ENCODE measurements at regions of chr19 and their contacts with region 1.

Region 1: DNA sequence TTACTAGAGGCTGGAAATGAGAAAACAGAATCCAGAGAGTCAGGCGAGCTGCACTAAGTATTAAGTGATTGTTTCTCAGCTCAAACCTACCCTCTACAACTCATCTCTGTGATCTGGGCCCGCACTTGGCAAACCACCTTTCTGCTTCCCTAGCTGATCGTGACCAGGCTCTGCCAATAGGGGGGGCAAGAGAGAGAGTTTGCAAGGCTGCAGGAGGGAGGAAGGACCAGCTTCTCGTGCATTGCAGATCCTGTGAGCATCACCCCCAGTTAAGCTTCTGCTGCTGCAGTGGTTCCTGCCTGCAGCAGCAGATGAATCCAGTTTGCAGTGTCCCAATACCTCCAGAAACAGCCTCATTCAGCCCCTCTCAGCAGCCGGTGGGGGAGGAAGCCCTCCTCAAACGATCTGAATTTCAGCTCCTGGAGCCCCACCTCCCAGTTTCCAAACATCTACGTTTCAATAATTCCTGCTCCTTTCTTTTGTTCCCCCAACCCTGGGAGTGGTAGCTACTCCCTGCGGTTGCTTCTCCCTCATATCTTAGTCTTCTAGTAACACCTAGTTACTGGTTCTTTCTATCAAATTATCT is 20.0 kb downstream of the XRCC1 start:
- DNase-seq: peak; percentile 78 to 87
- ATAC-seq: peak; percentile 87 to 94
- H3K4me3 ChIP-seq: no peak overlapping the region
- H3K27ac ChIP-seq: no peak overlapping the region
- H3K4me1 ChIP-seq: no peaks in the 10 kb centered on the region
- CTCF ChIP-seq: peak; percentile 81
- EP300 ChIP-seq: no peak
- POLR2A ChIP-seq: no peak
- RAD21 ChIP-seq: peak; percentile 55 to 77

Region 2: GRCh38 chr19:43498233-43498842 is 56.9 kb before region 1 on chr19:
- CTCF ChIA-PET with region 1: no interaction called
- POLR2A ChIA-PET with region 1: no interaction called
- DNase-seq: no peak
- ATAC-seq: no peak
- H3K4me3 ChIP-seq: no peak overlapping the region
- H3K27ac ChIP-seq: no peak overlapping the region
- H3K4me1 ChIP-seq: peaks cover 4% of the 10 kb centered on the region; the same call in 1 of the 3 replicates
- CTCF ChIP-seq: no peak
- EP300 ChIP-seq: no peak
- POLR2A ChIP-seq: no peak
- RAD21 ChIP-seq: no peak

Region 3: GRCh38 chr19:43526884-43527859 is 28.1 kb before region 1 on chr19 and contains the start of gene ETHE1:
- CTCF ChIA-PET with region 1: interaction called, 167 read pairs
- POLR2A ChIA-PET with region 1: interaction called, 4 read pairs
- DNase-seq: peak; percentile 62 to 89
- ATAC-seq: peak; percentile 80 to 89
- H3K4me3 ChIP-seq: peak within 1 kb of the TSS; percentile 90
- H3K27ac ChIP-seq: peak within 1 kb of the TSS; percentile 79 to 90
- H3K4me1 ChIP-seq: peaks cover 35% of the 10 kb centered on the region
- CTCF ChIP-seq: no peak
- EP300 ChIP-seq: no peak
- POLR2A ChIP-seq: peak; percentile 96
- RAD21 ChIP-seq: no peak
- polyA plus RNA-seq, gene ETHE1: 58.9 and 75.6 TPM in 2 replicates

Region 4: DNA sequence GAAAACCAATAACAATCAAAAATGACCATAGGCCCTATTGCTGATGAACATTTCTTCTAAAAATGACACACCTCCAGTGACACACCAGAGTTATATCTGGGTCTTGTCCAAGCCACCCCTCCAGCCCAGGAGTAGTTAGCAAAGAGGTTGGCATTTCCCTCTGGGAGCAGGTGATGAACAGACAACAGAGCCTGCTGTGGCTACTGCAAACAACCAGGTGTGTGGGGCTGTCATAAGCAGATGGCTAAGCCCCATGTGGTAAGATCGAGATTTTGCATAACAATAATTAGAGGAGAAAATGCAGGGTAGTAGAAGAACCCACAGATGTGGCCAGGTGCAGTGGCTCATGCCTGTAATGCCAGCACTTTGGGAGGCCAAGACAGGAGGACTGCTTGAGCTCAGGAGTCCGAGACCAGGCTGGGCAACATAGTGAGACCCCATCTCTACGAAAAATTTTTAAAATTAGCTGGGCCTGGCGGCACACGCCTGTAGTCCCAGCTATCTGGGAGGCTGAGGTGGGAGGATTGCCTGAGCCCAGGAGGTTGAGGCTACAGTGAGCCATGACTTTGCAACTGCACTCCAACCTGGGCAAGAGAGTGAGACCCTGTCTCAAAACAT is 15.0 kb after region 1 on chr19:
- CTCF ChIA-PET with region 1: interaction called, 69 read pairs
- POLR2A ChIA-PET with region 1: no interaction called
- DNase-seq: no peak
- ATAC-seq: no peak
- H3K4me3 ChIP-seq: no peak overlapping the region
- H3K27ac ChIP-seq: no peak overlapping the region
- H3K4me1 ChIP-seq: peaks cover 5% of the 10 kb centered on the region; the same call in 1 of the 3 replicates
- CTCF ChIP-seq: no peak
- EP300 ChIP-seq: no peak
- POLR2A ChIP-seq: no peak
- RAD21 ChIP-seq: no peak

Region 5: GRCh38 chr19:43595999-43596841 is 40.9 kb after region 1 on chr19 and contains the starts of genes IRGQ and ZNF576:
- CTCF ChIA-PET with region 1: interaction called, 44 read pairs
- POLR2A ChIA-PET with region 1: no interaction called
- DNase-seq: peak; percentile 99 to 100
- ATAC-seq: peak; percentile 88 to 89
- H3K4me3 ChIP-seq: peak within 1 kb of the TSS; percentile 66
- H3K27ac ChIP-seq: peak within 1 kb of the TSS; percentile 86 to 88
- H3K4me1 ChIP-seq: peaks cover 19% of the 10 kb centered on the region
- CTCF ChIP-seq: no peak
- EP300 ChIP-seq: no peak
- POLR2A ChIP-seq: peak; percentile 78
- RAD21 ChIP-seq: peak; percentile 13 to 36; a peak in 4 of 5 replicates
- polyA plus RNA-seq, gene IRGQ: 10.0 and 14.2 TPM in 2 replicates
- polyA plus RNA-seq, gene ZNF576: 10.6 and 11.2 TPM in 2 replicates

Region 6: GRCh38 chr19:43651758-43652545 is 96.7 kb after region 1 on chr19:
- CTCF ChIA-PET with region 1: interaction called, 46 read pairs
- POLR2A ChIA-PET with region 1: no interaction called
- DNase-seq: peak; percentile 80 to 84
- ATAC-seq: peak; percentile 82 to 91
- H3K4me3 ChIP-seq: no peak overlapping the region
- H3K27ac ChIP-seq: no peak overlapping the region
- H3K4me1 ChIP-seq: no peaks in the 10 kb centered on the region
- CTCF ChIP-seq: peak; percentile 78
- EP300 ChIP-seq: no peak
- POLR2A ChIP-seq: no peak
- RAD21 ChIP-seq: peak; percentile 73 to 81

Region 7: DNA sequence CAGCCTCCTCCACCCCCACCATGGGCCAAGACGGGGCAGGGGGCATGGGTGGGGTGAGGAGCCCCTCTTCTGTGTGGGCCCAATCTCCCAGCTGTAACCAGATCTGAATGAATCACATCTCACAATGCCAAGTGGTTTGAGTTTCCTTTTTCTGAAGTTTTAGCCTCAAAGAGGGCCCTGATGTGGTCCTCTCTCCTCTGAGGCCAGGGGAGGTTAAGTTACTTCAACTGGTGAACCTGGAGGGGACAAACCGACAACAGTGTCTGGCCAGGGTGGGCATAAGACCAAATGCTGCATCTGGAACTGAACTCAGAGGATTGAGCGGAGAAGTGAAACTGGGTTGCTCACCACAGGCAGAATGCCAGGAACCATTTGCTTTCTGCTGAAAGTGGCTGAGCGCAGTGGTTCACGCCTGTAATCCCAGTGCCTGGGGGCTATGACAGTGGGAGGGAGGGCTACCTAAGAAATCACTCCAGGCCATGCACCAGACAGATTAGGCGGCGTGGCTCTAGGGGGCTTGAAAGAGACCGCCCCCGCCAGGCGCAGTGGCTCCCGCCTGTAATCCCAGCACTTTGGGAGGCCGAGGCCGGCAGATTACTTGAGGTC is 145.2 kb after region 1 on chr19:
- CTCF ChIA-PET with region 1: no interaction called
- POLR2A ChIA-PET with region 1: no interaction called
- DNase-seq: no peak
- ATAC-seq: peak; percentile 22 to 30; a peak in 5 of 6 replicates
- H3K4me3 ChIP-seq: peak overlapping the region; percentile 26; the same call in 1 of the 3 replicates
- H3K27ac ChIP-seq: peak overlapping the region; percentile 76 to 91
- H3K4me1 ChIP-seq: peaks cover 49% of the 10 kb centered on the region
- CTCF ChIP-seq: no peak
- EP300 ChIP-seq: no peak
- POLR2A ChIP-seq: no peak
- RAD21 ChIP-seq: no peak